Activated CD8-positive, alpha-beta T cell treated with anti-CD3 and anti-CD28 coated beads, Interleukin-2, amount 10 ng/mL, durations not matched to agents 7 days and 5 days (primary cell): ENCODE measurements at regions of chr15 and their contacts with region 1.

Region 1: GRCh38 chr15:55179141-55179540 is 17.6 kb downstream of the RSL24D1 start:
- DNase-seq: no peak
- ATAC-seq: no peak
- H3K4me3 Mint-ChIP-seq: no peak overlapping the region
- H3K27ac Mint-ChIP-seq: no peak overlapping the region
- H3K4me1 Mint-ChIP-seq: no peaks in the 10 kb centered on the region
- H3K27me3 Mint-ChIP-seq: no peaks in the 10 kb centered on the region

Region 2: GRCh38 chr15:55168329-55168974 is 10.7 kb before region 1 on chr15:
- CTCF ChIA-PET with region 1: interaction called, 28 read pairs
- POLR2A ChIA-PET with region 1: no interaction called
- DNase-seq: peak; percentile 70
- ATAC-seq: peak; percentile 67
- H3K4me3 Mint-ChIP-seq: no peak overlapping the region
- H3K27ac Mint-ChIP-seq: no peak overlapping the region
- H3K4me1 Mint-ChIP-seq: no peaks in the 10 kb centered on the region
- H3K27me3 Mint-ChIP-seq: no peaks in the 10 kb centered on the region